ENCODE measurements at regions of chr4 and their contacts with region 1.

Region 1: GRCh38 chr4:102815981-102816380 is 11.4 kb downstream of the UBE2D3 start:
- DNase-seq: no peak
- H3K4me3 ChIP-seq: no peak overlapping the region
- H3K27ac ChIP-seq: no peak overlapping the region
- H3K4me1 ChIP-seq: peaks cover 12% of the 10 kb centered on the region
- H3K27me3 ChIP-seq: no peaks in the 10 kb centered on the region
- CTCF ChIP-seq: no peak
- EP300 ChIP-seq: no peak
- POLR2A ChIP-seq: no peak

Region 2: GRCh38 chr4:102760645-102761295 is 55.2 kb before region 1 on chr4 and contains the start of gene MANBA:
- intact Hi-C with region 1: loop called in 1 of 4 experiments (anchors 10 kb)
- DNase-seq: peak; percentile 70 to 79 (median 74)
- H3K4me3 ChIP-seq: peak within 1 kb of the TSS; percentile 98
- H3K27ac ChIP-seq: peak within 1 kb of the TSS; percentile 9 to 50
- H3K4me1 ChIP-seq: no peaks in the 10 kb centered on the region
- H3K27me3 ChIP-seq: no peaks in the 10 kb centered on the region
- CTCF ChIP-seq: no peak
- EP300 ChIP-seq: no peak
- POLR2A ChIP-seq: no peak
- total RNA-seq, gene MANBA: 21.9 to 30.1 (median 24.5) TPM

Measured in ovary (tissue), 10 donors.